Activated naive CD4-positive, alpha-beta T cell treated with anti-CD3 and anti-CD28 coated beads, Interleukin-2, amount 10 ng/mL, durations not matched to agents 7 days and 5 days (primary cell): ENCODE measurements at regions of chr20 and their contacts with region 1.

Region 1: DNA sequence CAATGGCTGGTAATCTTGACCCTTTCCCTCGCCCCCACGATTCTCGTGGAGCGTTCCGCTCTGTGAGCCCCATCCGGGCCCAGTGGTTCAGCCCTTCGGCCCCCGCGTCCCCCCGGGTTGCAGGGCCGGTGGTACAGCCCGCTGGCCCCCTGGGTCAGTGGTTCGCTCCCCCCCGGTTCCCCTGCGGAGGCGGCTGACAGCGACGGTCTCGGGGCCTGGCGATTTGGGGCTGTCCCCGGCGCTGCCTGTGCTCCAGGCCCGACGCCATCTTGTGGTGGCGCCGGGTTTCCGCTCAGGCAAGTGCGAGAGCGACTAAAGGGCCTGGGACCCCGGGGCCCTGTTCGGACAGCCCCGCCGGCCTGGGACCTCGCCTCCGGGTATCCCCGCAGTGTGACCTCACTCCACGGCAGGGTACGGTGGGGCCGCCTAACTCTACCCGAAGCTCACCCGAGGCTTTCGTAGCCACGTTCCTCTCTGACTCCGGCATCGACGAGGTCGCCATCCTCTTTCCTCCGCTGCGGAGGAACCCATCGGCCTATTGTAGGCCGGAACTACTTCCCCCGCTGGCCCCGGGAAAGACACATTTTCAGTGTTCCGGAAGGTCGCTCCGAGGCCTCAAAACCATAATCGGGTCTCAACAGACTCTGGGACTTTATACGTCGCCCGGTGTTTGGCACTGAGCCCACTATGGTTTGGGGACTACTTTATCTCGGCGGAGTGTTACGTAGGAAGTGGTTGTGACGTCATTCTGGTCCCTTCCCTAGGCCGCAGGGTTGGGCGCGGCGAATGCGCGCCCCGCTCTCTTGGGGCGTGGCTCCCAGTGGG is at the start of gene ZNF335:
- DNase-seq: peak; percentile 93
- H3K4me3 Mint-ChIP-seq: peak within 1 kb of the TSS; percentile 87
- H3K27ac Mint-ChIP-seq: peak within 1 kb of the TSS; percentile 100
- H3K4me1 Mint-ChIP-seq: peaks cover 26% of the 10 kb centered on the region
- H3K27me3 Mint-ChIP-seq: peaks cover 25% of the 10 kb centered on the region

Region 2: DNA sequence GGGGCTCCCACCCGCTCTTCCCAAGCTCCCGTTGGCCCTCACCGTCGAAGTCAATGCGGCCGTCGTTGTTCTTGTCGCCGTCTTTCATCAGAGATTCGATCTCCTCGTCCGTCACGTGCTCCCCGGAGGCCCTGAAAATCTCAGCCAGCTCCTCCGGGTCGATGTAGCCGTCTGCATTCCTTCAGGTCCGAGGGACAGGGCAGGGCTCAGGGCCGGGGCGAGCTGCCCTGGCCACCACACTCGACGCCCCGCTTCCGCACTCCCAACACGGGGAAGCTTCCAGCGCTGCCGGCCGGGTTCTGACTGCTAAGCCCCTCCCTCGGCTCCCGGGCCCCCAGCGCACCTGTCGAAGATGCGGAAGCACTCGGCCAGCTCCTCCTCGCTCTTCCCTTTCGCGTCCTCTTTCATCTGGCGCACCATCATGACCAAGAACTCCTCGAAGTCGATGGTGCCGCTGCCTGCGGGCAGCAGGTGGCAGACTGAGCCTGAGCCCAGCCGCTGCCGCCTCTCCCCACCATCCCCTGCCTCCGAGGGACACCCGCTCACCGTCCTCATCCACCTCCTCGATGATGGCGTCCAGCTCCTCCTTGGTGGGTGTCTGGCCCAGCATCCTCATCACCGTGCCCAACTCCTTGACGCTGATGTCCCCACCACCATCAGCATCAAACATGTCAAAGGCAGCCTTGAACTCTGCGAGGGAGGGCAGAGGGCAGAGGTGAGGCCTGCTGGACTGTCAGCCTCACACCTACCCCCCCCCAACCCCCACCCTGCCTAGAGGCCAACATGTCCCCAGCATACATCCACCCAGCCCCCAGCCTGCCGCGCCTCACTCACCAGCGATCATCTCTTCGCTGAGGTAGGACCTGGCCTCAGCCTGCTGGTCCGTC is 147.7 kb before region 1 on chr20:
- CTCF ChIA-PET with region 1: interaction called, 20 read pairs
- DNase-seq: peak; percentile 72
- H3K4me3 Mint-ChIP-seq: peak overlapping the region; percentile 34
- H3K27ac Mint-ChIP-seq: no peak overlapping the region
- H3K4me1 Mint-ChIP-seq: peaks cover 18% of the 10 kb centered on the region
- H3K27me3 Mint-ChIP-seq: peaks cover 64% of the 10 kb centered on the region

Region 3: DNA sequence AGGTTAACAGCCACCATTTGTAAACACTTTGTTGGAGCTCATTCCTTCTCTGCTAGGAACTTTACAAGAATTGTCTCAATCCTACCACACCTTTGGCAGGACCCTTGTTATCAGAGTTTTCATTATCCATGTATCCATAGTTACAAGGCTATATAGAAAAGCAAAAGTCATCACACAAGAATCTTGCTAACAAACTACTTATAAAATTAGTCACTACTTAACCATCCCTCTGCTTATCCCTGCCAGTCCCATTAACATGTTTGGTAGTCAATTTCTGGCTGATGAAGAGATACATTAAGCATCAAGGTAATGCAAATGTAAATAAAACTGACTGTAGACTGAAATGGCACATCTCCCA is 104.1 kb before region 1 on chr20:
- CTCF ChIA-PET with region 1: no interaction called
- DNase-seq: no peak
- H3K4me3 Mint-ChIP-seq: no peak overlapping the region
- H3K27ac Mint-ChIP-seq: no peak overlapping the region
- H3K4me1 Mint-ChIP-seq: peaks cover 2% of the 10 kb centered on the region
- H3K27me3 Mint-ChIP-seq: no peaks in the 10 kb centered on the region

Region 4: GRCh38 chr20:45944172-45944964 is 27.5 kb before region 1 on chr20:
- CTCF ChIA-PET with region 1: interaction called, 10 read pairs
- DNase-seq: no peak
- H3K4me3 Mint-ChIP-seq: no peak overlapping the region
- H3K27ac Mint-ChIP-seq: peak overlapping the region; percentile 45
- H3K4me1 Mint-ChIP-seq: peaks cover 2% of the 10 kb centered on the region
- H3K27me3 Mint-ChIP-seq: no peaks in the 10 kb centered on the region

Region 5: DNA sequence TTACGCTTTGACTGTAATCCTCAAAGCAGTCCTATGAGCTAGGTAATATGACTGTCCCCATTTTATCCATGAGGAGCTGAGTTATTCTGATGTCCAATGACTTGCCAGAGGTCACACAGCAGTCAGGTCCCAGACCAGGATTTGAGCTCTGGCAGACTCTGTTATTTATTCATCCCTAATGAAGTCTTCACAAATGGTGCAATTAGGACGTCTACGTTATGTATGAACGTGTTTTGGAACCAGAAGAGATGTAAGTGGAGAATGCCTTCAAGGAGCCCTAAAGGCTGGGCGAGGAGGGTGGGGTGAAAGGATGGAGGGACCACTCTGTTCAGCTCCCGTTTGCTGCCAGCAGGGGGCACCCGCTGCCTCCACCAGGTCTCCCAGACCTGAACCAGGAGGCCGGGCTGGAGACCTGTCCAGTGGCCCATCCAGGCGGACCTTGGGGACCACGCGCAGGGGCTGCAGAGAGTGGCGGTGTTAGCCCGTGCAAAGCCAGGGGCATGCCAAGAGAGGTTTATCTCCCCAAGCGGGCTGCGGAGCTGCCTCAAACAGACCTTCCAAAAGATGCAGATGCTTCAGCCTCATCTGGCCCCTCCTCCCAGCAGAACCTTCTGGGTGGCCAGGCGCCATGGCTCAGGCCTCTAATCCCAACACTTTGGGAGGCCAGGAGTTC is 15.4 kb after region 1 on chr20:
- CTCF ChIA-PET with region 1: interaction called, 32 read pairs
- DNase-seq: peak; percentile 85
- H3K4me3 Mint-ChIP-seq: no peak overlapping the region
- H3K27ac Mint-ChIP-seq: no peak overlapping the region
- H3K4me1 Mint-ChIP-seq: peaks cover 13% of the 10 kb centered on the region
- H3K27me3 Mint-ChIP-seq: peaks cover 69% of the 10 kb centered on the region